PC-9 (cell line): ENCODE measurements at regions of chr3 and their contacts with region 1.

Region 1: GRCh38 chr3:184561061-184561912 is at the start of gene EPHB3:
- DNase-seq: peak; percentile 99 to 100
- H3K4me3 ChIP-seq: peak within 1 kb of the TSS; percentile 60
- H3K27ac ChIP-seq: no peak within 1 kb of the TSS
- H3K4me1 ChIP-seq: peaks cover 46% of the 10 kb centered on the region
- H3K27me3 ChIP-seq: peaks cover 28% of the 10 kb centered on the region
- CTCF ChIP-seq: peak; percentile 100
- total RNA-seq, gene EPHB3: 12.0 and 15.7 TPM in 2 replicates

Region 2: GRCh38 chr3:184636741-184637316 is 75.5 kb after region 1 on chr3:
- CTCF ChIA-PET with region 1: interaction called, 10 read pairs
- POLR2A ChIA-PET with region 1: interaction called, 6 read pairs
- intact Hi-C with region 1: loop called (anchors 1 kb)
- DNase-seq: peak; percentile 83 to 87
- H3K4me3 ChIP-seq: no peak overlapping the region
- H3K27ac ChIP-seq: no peak overlapping the region
- H3K4me1 ChIP-seq: peaks cover 61% of the 10 kb centered on the region
- H3K27me3 ChIP-seq: no peaks in the 10 kb centered on the region
- CTCF ChIP-seq: no peak

Region 3: DNA sequence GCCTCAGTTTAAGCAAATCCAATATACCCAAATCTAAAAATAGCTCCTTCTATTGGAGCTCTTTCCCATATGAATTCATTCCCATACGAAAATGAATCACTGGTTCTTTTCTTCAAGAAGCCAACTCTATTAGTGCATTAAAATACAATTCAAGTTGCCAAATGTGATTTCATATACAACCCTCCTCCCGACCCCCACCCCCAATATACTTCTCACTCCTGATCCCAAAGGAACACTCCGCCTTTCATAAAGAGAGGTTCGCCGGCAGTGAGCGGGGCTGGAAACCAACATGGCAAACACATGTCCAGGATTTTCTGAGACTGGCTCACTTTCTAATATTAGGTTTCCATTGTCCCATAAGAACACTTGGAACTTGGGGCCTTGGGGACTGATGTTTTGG is 102.1 kb after region 1 on chr3:
- CTCF ChIA-PET with region 1: interaction called, 5 read pairs
- POLR2A ChIA-PET with region 1: interaction called, 21 read pairs
- intact Hi-C with region 1: no loop called
- DNase-seq: no peak
- H3K4me3 ChIP-seq: no peak overlapping the region
- H3K27ac ChIP-seq: no peak overlapping the region
- H3K4me1 ChIP-seq: peaks cover 20% of the 10 kb centered on the region
- H3K27me3 ChIP-seq: no peaks in the 10 kb centered on the region
- CTCF ChIP-seq: no peak

Region 4: DNA sequence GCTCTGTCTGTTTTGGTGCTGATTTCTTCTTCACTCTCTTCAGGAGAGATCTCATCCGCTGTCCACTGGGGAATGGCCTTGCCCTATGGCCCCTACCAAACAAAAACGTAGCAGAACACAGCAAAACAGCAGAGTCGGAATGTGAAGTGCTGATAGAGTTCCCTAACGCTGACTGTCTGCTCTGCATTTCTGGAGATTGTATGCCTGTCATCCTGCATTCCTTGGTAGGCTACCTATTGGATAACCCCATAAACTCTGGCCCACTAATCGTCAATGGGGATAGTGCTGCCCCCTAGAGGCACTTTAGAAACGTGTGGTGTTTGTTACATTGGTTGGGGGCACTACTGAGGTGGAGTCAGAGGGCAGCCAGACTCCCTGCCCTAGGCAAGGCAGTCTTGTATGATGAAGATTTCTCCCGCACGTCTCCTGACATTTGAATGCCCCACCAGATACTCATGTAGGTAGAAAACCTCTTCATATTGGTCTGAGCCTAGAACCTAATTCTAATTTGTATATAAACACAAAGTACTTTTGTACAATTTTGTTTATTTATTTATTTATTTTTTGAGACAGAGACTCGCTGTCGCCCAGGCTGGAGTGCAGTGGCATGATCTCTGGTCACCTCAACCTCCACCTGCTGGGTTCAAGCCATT is 166.2 kb after region 1 on chr3:
- CTCF ChIA-PET with region 1: interaction called, 21 read pairs
- POLR2A ChIA-PET with region 1: no interaction called
- intact Hi-C with region 1: loop called (anchors 1 kb)
- DNase-seq: peak; percentile 76 to 82
- H3K4me3 ChIP-seq: no peak overlapping the region
- H3K27ac ChIP-seq: no peak overlapping the region
- H3K4me1 ChIP-seq: peaks cover 10% of the 10 kb centered on the region
- H3K27me3 ChIP-seq: no peaks in the 10 kb centered on the region
- CTCF ChIP-seq: peak; percentile 91

Region 5: GRCh38 chr3:184748219-184749135 is 187.2 kb after region 1 on chr3:
- CTCF ChIA-PET with region 1: interaction called, 10 read pairs
- POLR2A ChIA-PET with region 1: no interaction called
- intact Hi-C with region 1: loop called (anchors 1 kb)
- DNase-seq: peak; percentile 41 to 55
- H3K4me3 ChIP-seq: no peak overlapping the region
- H3K27ac ChIP-seq: no peak overlapping the region
- H3K4me1 ChIP-seq: peaks cover 7% of the 10 kb centered on the region
- H3K27me3 ChIP-seq: no peaks in the 10 kb centered on the region
- CTCF ChIP-seq: peak; percentile 73

Region 6: GRCh38 chr3:184800349-184800930 is 239.2 kb after region 1 on chr3:
- CTCF ChIA-PET with region 1: interaction called, 11 read pairs
- POLR2A ChIA-PET with region 1: no interaction called
- intact Hi-C with region 1: loop called (anchors 1 kb)
- DNase-seq: no peak
- H3K4me3 ChIP-seq: no peak overlapping the region
- H3K27ac ChIP-seq: no peak overlapping the region
- H3K4me1 ChIP-seq: peaks cover 5% of the 10 kb centered on the region; the same call in 1 of the 2 replicates
- H3K27me3 ChIP-seq: peaks cover 22% of the 10 kb centered on the region; the same call in 1 of the 2 replicates
- CTCF ChIP-seq: no peak